ENCODE measurements at regions of chr11 and their contacts with region 1.

Region 1: GRCh38 chr11:117134431-117134830 is 9.7 kb upstream of the PAFAH1B2 start:
- H3K4me3 Mint-ChIP-seq: no peak overlapping the region
- H3K27ac Mint-ChIP-seq: no peak overlapping the region
- H3K4me1 Mint-ChIP-seq: peaks cover 7% of the 10 kb centered on the region
- H3K27me3 Mint-ChIP-seq: peaks cover 8% of the 10 kb centered on the region

Region 2: GRCh38 chr11:116835791-116836631 is 298.4 kb before region 1 on chr11:
- intact Hi-C with region 1: no loop called
- H3K4me3 Mint-ChIP-seq: peak overlapping the region; percentile 68
- H3K27ac Mint-ChIP-seq: peak overlapping the region; percentile 75
- H3K4me1 Mint-ChIP-seq: peaks cover 24% of the 10 kb centered on the region
- H3K27me3 Mint-ChIP-seq: peaks cover 9% of the 10 kb centered on the region

Region 3: GRCh38 chr11:117205211-117205818 is 70.9 kb after region 1 on chr11:
- intact Hi-C with region 1: loop called (anchors 5 kb)
- H3K4me3 Mint-ChIP-seq: no peak overlapping the region
- H3K27ac Mint-ChIP-seq: no peak overlapping the region
- H3K4me1 Mint-ChIP-seq: peaks cover 10% of the 10 kb centered on the region
- H3K27me3 Mint-ChIP-seq: no peaks in the 10 kb centered on the region

Measured in dendritic cell treated with granulocyte-macrophage colony-stimulating factor and Interleukin-4, amounts not matched to agents 40 ng/mL and 50 ng/mL, for 4 days (primary cell).